ENCODE measurements at regions of chr18 and their contacts with region 1.

Region 1: DNA sequence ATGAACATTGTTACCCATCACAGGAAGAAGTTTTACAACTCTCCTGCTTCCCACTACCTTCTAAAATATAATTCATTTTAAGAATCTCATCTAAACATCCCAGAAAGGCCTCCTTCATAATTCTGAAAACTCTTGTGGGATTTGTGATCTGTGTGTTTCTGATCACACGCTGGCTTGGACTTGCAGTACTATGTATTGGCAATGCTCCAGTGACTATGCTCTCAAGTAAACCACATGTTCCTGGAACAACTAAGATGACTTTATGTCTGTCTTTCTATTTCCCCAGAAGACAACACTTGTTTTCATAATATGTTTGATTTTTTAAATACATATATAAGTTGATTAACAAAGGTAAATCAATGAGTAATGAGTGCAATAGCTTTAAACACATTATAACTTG is 376.6 kb upstream of the NETO1 start:
- DNase-seq: no peak
- H3K4me3 ChIP-seq: no peak overlapping the region
- H3K27ac ChIP-seq: no peak overlapping the region
- H3K4me1 ChIP-seq: no peaks in the 10 kb centered on the region
- H3K27me3 ChIP-seq: no peaks in the 10 kb centered on the region
- CTCF ChIP-seq: no peak
- POLR2A ChIP-seq: no peak

Region 2: GRCh38 chr18:73986711-73987110 is 742.3 kb after region 1 on chr18:
- intact Hi-C with region 1: loop called (anchors 5 kb)
- DNase-seq: no peak
- H3K4me3 ChIP-seq: no peak overlapping the region
- H3K27ac ChIP-seq: no peak overlapping the region
- H3K4me1 ChIP-seq: no peaks in the 10 kb centered on the region
- H3K27me3 ChIP-seq: no peaks in the 10 kb centered on the region
- CTCF ChIP-seq: no peak
- POLR2A ChIP-seq: no peak

Region 3: GRCh38 chr18:74217476-74218143 is 973.2 kb after region 1 on chr18:
- intact Hi-C with region 1: no loop called
- DNase-seq: peak in 1 of 2 donors; percentile 42
- H3K4me3 ChIP-seq: no peak overlapping the region
- H3K27ac ChIP-seq: no peak overlapping the region
- H3K4me1 ChIP-seq: peaks cover 0 to 3% of the 10 kb centered on the region in 2 donors
- H3K27me3 ChIP-seq: no peaks in the 10 kb centered on the region
- CTCF ChIP-seq: no peak
- POLR2A ChIP-seq: no peak